Caco-2 (cell line): ENCODE measurements at regions of chr20 and their contacts with region 1.

Region 1: DNA sequence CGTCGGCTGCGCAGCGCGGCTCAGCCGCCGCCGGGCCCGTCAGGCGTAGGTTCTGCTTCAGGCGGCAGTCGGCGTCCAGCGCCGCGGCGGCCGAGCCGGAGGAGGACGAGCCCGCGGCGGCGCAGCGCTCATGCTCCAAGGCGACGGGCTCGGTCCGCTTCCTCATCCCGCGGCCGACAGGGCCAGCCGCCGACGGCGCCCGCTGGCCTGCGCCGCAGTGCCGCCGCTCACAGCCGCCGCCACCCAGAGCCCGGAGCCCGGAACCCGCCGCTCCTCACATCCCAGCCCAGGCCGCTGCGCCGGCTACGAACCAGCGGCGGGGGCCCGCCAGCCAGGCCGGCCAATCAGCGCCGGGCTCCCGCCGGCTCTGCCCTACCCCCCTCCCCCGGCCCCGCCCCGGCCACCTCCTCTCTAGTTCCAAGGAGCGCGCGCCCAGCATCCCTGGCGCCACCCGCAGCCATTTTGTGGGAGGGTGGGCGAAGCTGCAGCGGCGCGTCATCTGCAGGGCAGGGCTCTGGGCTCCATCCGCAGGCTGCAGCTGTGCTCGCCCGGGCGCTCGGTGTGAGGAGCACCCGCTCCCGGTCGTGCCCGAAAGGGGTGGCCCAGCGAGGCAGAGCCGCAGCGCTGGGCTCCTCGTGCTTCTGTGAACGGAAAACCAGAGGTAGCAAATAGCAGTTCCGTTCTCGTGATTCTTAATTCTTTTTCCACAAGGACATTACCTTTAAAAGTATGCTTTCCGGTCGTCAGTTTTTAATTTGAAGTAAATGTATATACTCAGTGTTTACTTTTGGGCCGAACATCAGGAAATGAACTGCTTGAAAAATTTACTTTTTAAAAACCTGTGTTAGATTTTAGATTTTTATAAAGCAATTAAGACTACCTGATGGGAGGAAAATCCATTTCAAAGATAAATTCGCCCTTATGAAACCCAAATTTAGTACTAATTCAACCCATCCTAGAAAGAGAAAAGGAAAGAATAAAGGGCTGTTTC is at the start of gene ABHD12:
- DNase-seq: peak; percentile 97 to 98
- H3K4me3 ChIP-seq: peak within 1 kb of the TSS; percentile 97
- H3K4me3 Mint-ChIP-seq: peak within 1 kb of the TSS; percentile 91
- H3K27ac Mint-ChIP-seq: peak within 1 kb of the TSS; percentile 79
- H3K4me1 ChIP-seq: peaks cover 10% of the 10 kb centered on the region
- H3K4me1 Mint-ChIP-seq: peaks cover 6% of the 10 kb centered on the region
- H3K27me3 ChIP-seq: no peaks in the 10 kb centered on the region
- H3K27me3 Mint-ChIP-seq: no peaks in the 10 kb centered on the region
- CTCF ChIP-seq: no peak
- total RNA-seq, gene ABHD12: 84.9 and 104 TPM in 2 replicates

Region 2: DNA sequence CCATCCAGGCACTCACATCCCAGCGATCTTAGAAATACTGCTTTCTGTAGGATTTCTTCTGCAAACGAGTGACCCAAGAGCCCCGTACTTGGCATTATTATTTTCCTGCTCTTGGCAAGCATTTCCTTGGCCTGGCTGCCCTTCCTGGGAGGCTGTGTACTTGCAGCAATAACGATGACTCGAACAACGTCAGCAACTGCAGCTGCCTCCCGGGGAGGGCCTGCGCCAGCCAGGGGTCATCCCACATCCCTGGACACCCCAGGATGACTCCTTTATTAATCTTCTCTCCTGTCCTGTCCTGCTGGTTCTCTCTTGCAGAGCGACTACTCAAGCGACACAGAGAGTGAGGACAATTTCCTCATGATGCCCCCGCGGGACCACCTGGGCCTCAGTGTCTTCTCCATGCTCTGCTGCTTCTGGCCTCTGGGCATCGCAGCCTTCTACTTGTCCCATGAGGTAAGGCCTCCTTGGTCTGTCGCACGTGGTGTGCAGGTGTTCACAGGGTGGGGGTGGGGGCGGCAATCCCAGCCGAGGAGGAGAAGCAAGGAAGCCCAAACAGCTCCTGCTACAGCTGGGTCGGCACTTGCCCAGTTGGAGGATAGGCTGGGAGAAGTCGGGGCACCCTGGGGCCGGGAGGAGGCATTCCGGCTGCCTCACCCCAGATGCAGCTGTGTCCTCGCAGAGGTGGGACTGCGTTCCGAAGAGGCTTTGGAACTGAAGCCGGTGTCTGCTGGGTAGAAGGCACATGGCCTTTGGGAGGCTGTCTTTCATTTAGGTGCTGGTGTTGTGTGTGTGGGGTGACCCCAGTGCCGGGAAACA is 806.1 kb before region 1 on chr20:
- CTCF ChIA-PET with region 1: no interaction called
- POLR2A ChIA-PET with region 1: no interaction called
- intact Hi-C with region 1: no loop called
- DNase-seq: no peak
- H3K4me3 ChIP-seq: no peak overlapping the region
- H3K4me3 Mint-ChIP-seq: no peak overlapping the region
- H3K27ac Mint-ChIP-seq: no peak overlapping the region
- H3K4me1 ChIP-seq: no peaks in the 10 kb centered on the region
- H3K4me1 Mint-ChIP-seq: no peaks in the 10 kb centered on the region
- H3K27me3 ChIP-seq: no peaks in the 10 kb centered on the region; the same call in none of the 2 replicates
- H3K27me3 Mint-ChIP-seq: peaks cover 13% of the 10 kb centered on the region
- CTCF ChIP-seq: no peak

Region 3: DNA sequence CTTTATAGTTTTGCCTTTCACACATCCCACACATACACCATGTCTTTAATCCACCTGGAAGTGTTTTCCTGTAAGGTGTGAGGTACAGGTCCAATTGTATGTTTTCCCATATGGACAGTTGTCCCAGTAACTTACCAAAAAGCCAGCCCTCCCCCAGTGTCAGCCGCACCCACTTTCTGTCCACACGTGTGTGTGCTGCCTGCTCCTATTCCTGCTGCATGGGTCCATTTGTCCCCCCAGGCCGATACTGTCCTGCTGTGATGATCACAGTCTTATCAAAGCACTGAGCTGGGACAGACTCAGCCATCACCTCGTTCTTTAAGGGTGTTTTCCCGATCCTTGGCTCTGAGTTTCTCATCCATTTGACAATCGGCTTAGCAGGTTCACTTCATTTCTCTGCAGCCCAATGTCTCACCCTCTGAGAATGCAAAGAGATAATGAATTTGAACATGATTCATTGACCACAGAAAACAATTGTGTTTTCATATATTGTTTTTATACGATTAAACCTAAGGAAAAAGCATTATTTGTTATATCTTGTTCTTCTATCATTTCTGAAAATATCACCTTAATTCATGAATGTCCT is 318.5 kb before region 1 on chr20:
- CTCF ChIA-PET with region 1: no interaction called
- POLR2A ChIA-PET with region 1: no interaction called
- intact Hi-C with region 1: no loop called
- DNase-seq: no peak
- H3K4me3 ChIP-seq: no peak overlapping the region
- H3K4me3 Mint-ChIP-seq: no peak overlapping the region
- H3K27ac Mint-ChIP-seq: no peak overlapping the region
- H3K4me1 ChIP-seq: 0 out of 2 replicates have a peak, but pooled peaks cover 8% of the 10 kb centered on the region
- H3K4me1 Mint-ChIP-seq: peaks cover 11% of the 10 kb centered on the region
- H3K27me3 ChIP-seq: no peaks in the 10 kb centered on the region
- H3K27me3 Mint-ChIP-seq: peaks cover 2% of the 10 kb centered on the region
- CTCF ChIP-seq: no peak

Region 4: GRCh38 chr20:25310268-25310920 is 80.4 kb before region 1 on chr20:
- CTCF ChIA-PET with region 1: no interaction called
- POLR2A ChIA-PET with region 1: no interaction called
- intact Hi-C with region 1: loop called (anchors 2 kb)
- DNase-seq: peak; percentile 87 to 90
- H3K4me3 ChIP-seq: no peak overlapping the region
- H3K4me3 Mint-ChIP-seq: peak overlapping the region; percentile 51
- H3K27ac Mint-ChIP-seq: peak overlapping the region; percentile 87
- H3K4me1 ChIP-seq: peaks cover 31% of the 10 kb centered on the region
- H3K4me1 Mint-ChIP-seq: peaks cover 28% of the 10 kb centered on the region
- H3K27me3 ChIP-seq: no peaks in the 10 kb centered on the region
- H3K27me3 Mint-ChIP-seq: no peaks in the 10 kb centered on the region
- CTCF ChIP-seq: peak; percentile 57 to 91

Region 5: GRCh38 chr20:25341716-25342680 is 48.8 kb before region 1 on chr20:
- CTCF ChIA-PET with region 1: interaction called, 70 read pairs
- POLR2A ChIA-PET with region 1: interaction called, 13 read pairs
- intact Hi-C with region 1: loop called (anchors 2 kb)
- DNase-seq: no peak
- H3K4me3 ChIP-seq: no peak overlapping the region
- H3K4me3 Mint-ChIP-seq: no peak overlapping the region
- H3K27ac Mint-ChIP-seq: no peak overlapping the region
- H3K4me1 ChIP-seq: peaks cover 56% of the 10 kb centered on the region
- H3K4me1 Mint-ChIP-seq: peaks cover 53% of the 10 kb centered on the region
- H3K27me3 ChIP-seq: no peaks in the 10 kb centered on the region
- H3K27me3 Mint-ChIP-seq: no peaks in the 10 kb centered on the region
- CTCF ChIP-seq: no peak

Region 6: DNA sequence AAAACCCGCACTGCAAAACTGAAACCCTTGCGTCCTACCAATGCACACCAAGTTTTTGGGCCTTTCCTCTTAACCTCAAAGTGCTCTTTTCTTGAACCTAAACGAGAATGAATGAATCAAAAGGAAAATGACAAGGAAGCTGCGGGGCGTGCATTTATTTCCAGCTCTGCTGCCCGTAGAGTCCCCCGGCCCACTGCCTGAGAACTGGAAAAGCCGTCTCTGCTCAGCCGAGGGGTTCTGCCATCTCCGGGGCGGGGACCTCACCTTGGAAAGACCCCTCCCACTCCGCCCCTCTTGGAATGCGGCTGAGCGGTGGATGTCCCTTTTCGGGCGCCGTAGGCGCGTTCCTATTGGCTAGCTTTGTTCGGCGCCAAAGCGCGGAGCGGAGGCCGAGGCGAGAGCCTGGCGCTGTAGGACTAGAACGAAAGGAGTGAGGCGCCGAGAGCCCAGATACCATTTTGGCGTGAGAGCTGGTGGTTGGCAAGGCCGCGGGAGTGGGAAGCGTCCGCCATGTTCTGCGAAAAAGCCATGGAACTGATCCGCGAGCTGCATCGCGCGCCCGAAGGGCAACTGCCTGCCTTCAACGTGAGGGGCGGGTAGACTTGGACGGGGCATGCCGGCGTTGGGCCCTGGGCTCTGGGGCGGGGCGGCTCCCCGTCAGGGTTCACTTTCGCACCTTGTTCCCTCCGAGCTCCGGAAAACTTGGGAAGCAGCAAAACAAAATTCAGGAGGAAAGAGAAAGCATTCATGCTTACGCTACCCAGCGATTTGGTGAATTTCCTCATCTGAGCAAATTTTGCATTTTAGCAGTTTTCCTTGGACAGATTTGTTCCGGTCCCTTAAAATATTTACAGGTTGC is 16.7 kb after region 1 on chr20 and contains the start of gene GINS1:
- CTCF ChIA-PET with region 1: no interaction called
- POLR2A ChIA-PET with region 1: interaction called, 9 read pairs
- intact Hi-C with region 1: loop called (anchors 1 kb)
- DNase-seq: peak; percentile 98
- H3K4me3 ChIP-seq: peak within 1 kb of the TSS; percentile 69
- H3K4me3 Mint-ChIP-seq: peak within 1 kb of the TSS; percentile 96
- H3K27ac Mint-ChIP-seq: peak within 1 kb of the TSS; percentile 99
- H3K4me1 ChIP-seq: 0 out of 2 replicates have a peak, but pooled peaks cover 3% of the 10 kb centered on the region
- H3K4me1 Mint-ChIP-seq: peaks cover 11% of the 10 kb centered on the region
- H3K27me3 ChIP-seq: no peaks in the 10 kb centered on the region
- H3K27me3 Mint-ChIP-seq: no peaks in the 10 kb centered on the region
- CTCF ChIP-seq: no peak
- total RNA-seq, gene GINS1: 48.7 and 50.9 TPM in 2 replicates